CD4-positive, alpha-beta T cell (primary cell): ENCODE measurements at regions of chr16 and their contacts with region 1.

Region 1: DNA sequence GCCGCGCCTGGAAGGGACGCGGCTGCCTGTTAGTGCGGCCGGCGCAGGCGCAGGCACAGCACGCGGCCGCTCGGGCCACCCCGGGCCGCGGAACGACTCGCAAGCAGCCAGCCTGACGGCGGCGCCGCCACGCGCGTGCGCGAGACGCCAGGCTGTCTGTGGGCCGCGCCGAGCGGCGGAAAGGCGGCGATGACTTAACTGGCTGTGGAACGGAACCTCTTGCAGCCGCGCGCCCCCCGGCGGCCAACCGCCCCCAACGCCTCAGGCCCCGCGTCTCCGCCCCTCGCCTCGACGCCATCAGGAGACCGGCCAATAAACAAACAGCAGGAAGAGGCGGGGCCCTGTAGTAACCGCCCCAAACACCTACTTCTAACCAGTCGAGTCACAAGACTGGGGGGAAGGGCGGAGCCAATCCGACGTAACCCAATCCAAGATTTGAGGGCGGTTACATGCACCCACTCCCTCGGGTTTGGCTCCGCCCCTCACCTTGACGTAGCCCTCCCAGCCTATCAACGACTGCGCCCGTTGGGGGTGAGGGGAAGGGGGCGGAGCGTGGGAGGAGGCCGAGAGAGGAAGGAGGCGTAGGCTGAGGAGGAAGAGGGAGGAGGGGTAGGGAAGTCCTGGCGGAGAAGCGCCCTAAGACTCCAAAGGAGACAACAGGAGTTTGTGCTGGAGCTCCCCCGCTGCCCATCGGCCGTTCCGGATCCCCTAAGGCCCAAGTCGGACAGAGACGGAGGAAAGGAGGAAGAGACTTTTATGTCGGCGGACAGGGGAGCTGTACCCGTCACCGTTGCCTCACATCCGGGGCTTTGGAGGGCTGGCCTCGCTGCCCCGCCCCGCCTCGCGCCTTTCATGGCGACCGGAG is at the start of gene FBRS:
- DNase-seq: peak; percentile 99 to 100 (median 100)
- ATAC-seq: peak; percentile 74
- H3K4me3 ChIP-seq: peak within 1 kb of the TSS; percentile 93
- H3K4me3 Mint-ChIP-seq: peak within 1 kb of the TSS; percentile 94
- H3K27ac ChIP-seq: peak within 1 kb of the TSS; percentile 99
- H3K27ac Mint-ChIP-seq: peak within 1 kb of the TSS; percentile 99
- H3K4me1 ChIP-seq: peaks cover 51% of the 10 kb centered on the region
- H3K4me1 Mint-ChIP-seq: peaks cover 44% of the 10 kb centered on the region
- H3K27me3 ChIP-seq: no peaks in the 10 kb centered on the region
- H3K27me3 Mint-ChIP-seq: no peaks in the 10 kb centered on the region
- CTCF ChIP-seq: peak; percentile 78
- total RNA-seq, gene FBRS: 162 to 163 TPM

Region 2: DNA sequence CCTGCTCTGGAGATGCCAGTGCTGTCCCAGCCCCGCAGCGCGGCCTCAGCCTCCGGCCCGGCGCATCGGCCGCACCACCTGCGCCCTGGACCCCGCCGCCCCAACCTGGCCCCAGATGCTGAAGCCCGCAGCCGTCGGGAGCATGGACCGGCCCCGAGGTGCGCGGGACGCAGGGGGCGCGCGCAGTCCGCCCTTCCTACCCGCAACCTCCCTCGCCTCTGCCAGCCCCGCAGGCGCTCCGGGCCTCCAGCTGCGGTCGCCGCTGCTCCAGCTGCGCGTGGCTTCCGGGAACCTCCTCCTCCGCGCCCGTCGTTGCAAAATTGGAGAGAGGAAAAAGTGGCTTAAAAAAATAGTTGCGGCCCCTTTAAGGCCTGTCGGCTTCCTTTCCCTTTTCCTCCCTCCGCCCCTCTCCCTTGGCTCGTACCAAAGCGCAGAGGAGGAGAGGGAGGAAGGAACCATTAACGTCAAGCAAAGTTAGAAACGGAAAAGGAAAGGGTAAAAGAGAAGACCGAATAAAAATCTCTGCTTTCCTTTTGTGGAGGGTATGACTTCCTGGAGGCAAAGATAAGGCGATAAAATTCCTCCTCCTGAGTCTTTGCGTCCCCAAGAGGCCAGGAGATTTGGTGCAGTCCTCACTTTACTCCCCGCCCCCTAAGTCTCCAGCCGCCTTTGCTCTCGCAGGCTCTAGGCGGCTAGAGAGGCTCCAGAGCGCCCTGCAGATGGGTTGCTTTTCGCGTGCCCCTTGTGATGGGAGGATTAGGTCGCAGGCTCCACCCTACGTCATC is 795.0 kb before region 1 on chr16 and contains the start of gene CDIPT:
- CTCF ChIA-PET with region 1: no interaction called
- POLR2A ChIA-PET with region 1: no interaction called
- intact Hi-C with region 1: loop called in 1 of 2 experiments (anchors 1 kb)
- DNase-seq: peak; percentile 85 to 98 (median 90)
- ATAC-seq: peak; percentile 96
- H3K4me3 ChIP-seq: peak within 1 kb of the TSS; percentile 76
- H3K4me3 Mint-ChIP-seq: peak within 1 kb of the TSS; percentile 95
- H3K27ac ChIP-seq: peak within 1 kb of the TSS; percentile 87 to 97
- H3K27ac Mint-ChIP-seq: peak within 1 kb of the TSS; percentile 95
- H3K4me1 ChIP-seq: peaks cover 30% of the 10 kb centered on the region
- H3K4me1 Mint-ChIP-seq: peaks cover 22% of the 10 kb centered on the region
- H3K27me3 ChIP-seq: no peaks in the 10 kb centered on the region
- H3K27me3 Mint-ChIP-seq: no peaks in the 10 kb centered on the region
- CTCF ChIP-seq: peak; percentile 70
- total RNA-seq, gene CDIPT: 25.7 to 27.0 TPM

Region 3: GRCh38 chr16:30340621-30341020 is 317.5 kb before region 1 on chr16:
- CTCF ChIA-PET with region 1: no interaction called
- POLR2A ChIA-PET with region 1: no interaction called
- intact Hi-C with region 1: no loop called
- DNase-seq: peak in 2 of 14 experiments; percentile 19 to 23
- ATAC-seq: peak; percentile 66
- H3K4me3 ChIP-seq: no peak overlapping the region
- H3K4me3 Mint-ChIP-seq: no peak overlapping the region
- H3K27ac ChIP-seq: no peak overlapping the region
- H3K27ac Mint-ChIP-seq: peak overlapping the region; percentile 24
- H3K4me1 ChIP-seq: peaks cover 15% of the 10 kb centered on the region
- H3K4me1 Mint-ChIP-seq: peaks cover 11% of the 10 kb centered on the region
- H3K27me3 ChIP-seq: no peaks in the 10 kb centered on the region
- H3K27me3 Mint-ChIP-seq: no peaks in the 10 kb centered on the region
- CTCF ChIP-seq: no peak

Region 4: GRCh38 chr16:30534368-30535105 is 123.6 kb before region 1 on chr16 and contains the start of gene ZNF747:
- CTCF ChIA-PET with region 1: interaction called, 5 read pairs
- POLR2A ChIA-PET with region 1: interaction called, 20 read pairs
- intact Hi-C with region 1: no loop called
- DNase-seq: peak; percentile 88 to 95 (median 92)
- ATAC-seq: peak; percentile 80
- H3K4me3 ChIP-seq: peak within 1 kb of the TSS; percentile 87
- H3K4me3 Mint-ChIP-seq: peak within 1 kb of the TSS; percentile 94
- H3K27ac ChIP-seq: peak within 1 kb of the TSS; percentile 85 to 96
- H3K27ac Mint-ChIP-seq: peak within 1 kb of the TSS; percentile 99
- H3K4me1 ChIP-seq: peaks cover 52% of the 10 kb centered on the region
- H3K4me1 Mint-ChIP-seq: peaks cover 43% of the 10 kb centered on the region
- H3K27me3 ChIP-seq: no peaks in the 10 kb centered on the region
- H3K27me3 Mint-ChIP-seq: no peaks in the 10 kb centered on the region
- CTCF ChIP-seq: no peak
- total RNA-seq, gene ZNF747: 6.3 to 6.7 TPM

Region 5: DNA sequence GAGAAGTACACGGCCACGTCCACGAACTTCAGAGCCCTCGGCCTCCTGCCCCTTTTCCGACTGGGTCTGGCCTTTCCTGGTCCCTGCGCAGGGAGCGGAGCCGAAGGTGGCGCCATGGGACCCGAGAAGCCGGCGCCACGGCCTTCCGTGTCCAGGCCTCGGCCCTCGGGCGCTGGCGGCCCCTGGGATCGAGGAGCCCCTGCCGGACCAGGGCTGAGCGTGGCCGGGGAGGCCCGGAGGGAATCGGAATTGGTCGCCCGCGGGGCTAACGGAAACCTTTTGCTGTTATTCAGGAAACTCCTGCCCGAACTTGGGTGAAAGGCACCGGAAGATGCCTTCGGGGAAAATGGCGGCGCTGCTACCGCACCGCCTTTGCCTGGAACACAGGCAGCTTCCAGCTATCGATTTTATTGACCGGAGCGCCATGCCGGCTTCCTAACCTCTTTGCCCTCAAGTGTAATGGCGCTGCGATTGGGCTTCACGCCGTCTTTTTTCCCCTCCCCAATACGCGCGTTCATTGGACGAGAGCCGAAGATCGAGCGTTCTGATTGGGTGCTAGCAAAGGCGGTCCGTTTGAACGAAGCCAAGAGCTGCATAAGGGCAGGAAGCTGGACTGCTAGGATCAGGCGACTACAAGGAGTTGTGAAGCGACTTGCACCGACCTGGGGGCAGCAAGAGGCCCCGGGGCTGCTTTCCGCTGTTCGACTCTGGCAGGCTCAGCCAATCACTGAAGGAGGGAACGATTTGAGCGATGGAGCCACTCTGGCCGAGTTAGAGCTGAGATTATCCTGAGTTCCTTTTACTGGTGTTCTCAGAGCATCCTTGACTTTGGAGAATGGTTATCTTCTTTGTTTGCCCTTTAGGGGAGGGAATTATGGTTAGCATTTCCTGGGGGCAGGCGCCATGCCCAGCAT is 47.9 kb before region 1 on chr16 and contains the start of gene ZNF689:
- CTCF ChIA-PET with region 1: interaction called, 4 read pairs
- POLR2A ChIA-PET with region 1: interaction called, 19 read pairs
- intact Hi-C with region 1: no loop called
- DNase-seq: peak; percentile 88 to 97 (median 94)
- ATAC-seq: peak; percentile 92
- H3K4me3 ChIP-seq: peak within 1 kb of the TSS; percentile 74
- H3K4me3 Mint-ChIP-seq: peak within 1 kb of the TSS; percentile 91
- H3K27ac ChIP-seq: peak within 1 kb of the TSS; percentile 86 to 89
- H3K27ac Mint-ChIP-seq: peak within 1 kb of the TSS; percentile 93
- H3K4me1 ChIP-seq: peaks cover 26% of the 10 kb centered on the region
- H3K4me1 Mint-ChIP-seq: peaks cover 23% of the 10 kb centered on the region
- H3K27me3 ChIP-seq: no peaks in the 10 kb centered on the region
- H3K27me3 Mint-ChIP-seq: no peaks in the 10 kb centered on the region
- CTCF ChIP-seq: no peak
- total RNA-seq, gene ZNF689: 15.3 to 15.7 TPM

Region 6: DNA sequence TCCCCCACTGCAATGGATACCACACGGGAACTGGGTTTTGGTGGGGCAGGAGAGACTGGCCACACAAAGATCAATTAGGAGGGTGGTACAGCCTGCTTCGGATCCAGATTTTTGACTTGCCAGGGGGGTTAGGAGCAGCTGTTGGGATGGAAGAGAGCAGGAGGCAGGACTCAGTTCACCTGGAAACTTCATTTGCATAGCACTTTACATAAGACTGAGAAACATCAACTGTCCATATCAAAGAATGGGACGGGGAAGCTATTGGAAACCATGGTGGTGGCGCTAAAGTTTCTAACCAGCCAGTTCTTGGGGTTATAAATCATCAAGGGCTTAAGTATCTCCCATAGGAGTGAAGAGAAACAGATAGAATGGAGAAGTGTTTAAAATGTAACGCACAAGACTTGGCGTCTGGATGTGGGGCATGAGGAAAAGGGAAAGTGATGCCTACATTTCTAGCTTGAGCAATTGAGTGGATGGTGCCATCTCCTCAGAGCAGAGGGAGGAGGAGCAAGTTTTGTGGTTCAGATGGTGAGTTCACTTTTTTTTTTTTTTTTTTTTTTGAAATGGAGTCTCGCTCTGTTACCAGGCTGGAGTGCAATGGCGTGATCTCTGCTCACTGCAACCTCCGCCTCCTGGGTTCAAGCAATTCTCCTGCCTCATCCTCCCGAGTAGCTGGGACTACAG is 34.4 kb after region 1 on chr16:
- CTCF ChIA-PET with region 1: interaction called, 53 read pairs
- POLR2A ChIA-PET with region 1: interaction called, 82 read pairs
- intact Hi-C with region 1: loop called (anchors 1 kb)
- DNase-seq: no peak
- ATAC-seq: no peak
- H3K4me3 ChIP-seq: no peak overlapping the region
- H3K4me3 Mint-ChIP-seq: no peak overlapping the region
- H3K27ac ChIP-seq: no peak overlapping the region
- H3K27ac Mint-ChIP-seq: no peak overlapping the region
- H3K4me1 ChIP-seq: peaks cover 16% of the 10 kb centered on the region
- H3K4me1 Mint-ChIP-seq: peaks cover 16% of the 10 kb centered on the region
- H3K27me3 ChIP-seq: no peaks in the 10 kb centered on the region
- H3K27me3 Mint-ChIP-seq: no peaks in the 10 kb centered on the region
- CTCF ChIP-seq: no peak

Region 7: GRCh38 chr16:30724641-30725417 is 66.7 kb after region 1 on chr16:
- CTCF ChIA-PET with region 1: no interaction called
- POLR2A ChIA-PET with region 1: no interaction called
- intact Hi-C with region 1: no loop called
- DNase-seq: peak in 3 of 14 experiments; percentile 24 to 53 (median 52)
- ATAC-seq: no peak
- H3K4me3 ChIP-seq: no peak overlapping the region
- H3K4me3 Mint-ChIP-seq: no peak overlapping the region
- H3K27ac ChIP-seq: no peak overlapping the region
- H3K27ac Mint-ChIP-seq: peak overlapping the region; percentile 18
- H3K4me1 ChIP-seq: peaks cover 4% of the 10 kb centered on the region
- H3K4me1 Mint-ChIP-seq: peaks cover 5% of the 10 kb centered on the region
- H3K27me3 ChIP-seq: no peaks in the 10 kb centered on the region
- H3K27me3 Mint-ChIP-seq: no peaks in the 10 kb centered on the region
- CTCF ChIP-seq: no peak

Region 8: DNA sequence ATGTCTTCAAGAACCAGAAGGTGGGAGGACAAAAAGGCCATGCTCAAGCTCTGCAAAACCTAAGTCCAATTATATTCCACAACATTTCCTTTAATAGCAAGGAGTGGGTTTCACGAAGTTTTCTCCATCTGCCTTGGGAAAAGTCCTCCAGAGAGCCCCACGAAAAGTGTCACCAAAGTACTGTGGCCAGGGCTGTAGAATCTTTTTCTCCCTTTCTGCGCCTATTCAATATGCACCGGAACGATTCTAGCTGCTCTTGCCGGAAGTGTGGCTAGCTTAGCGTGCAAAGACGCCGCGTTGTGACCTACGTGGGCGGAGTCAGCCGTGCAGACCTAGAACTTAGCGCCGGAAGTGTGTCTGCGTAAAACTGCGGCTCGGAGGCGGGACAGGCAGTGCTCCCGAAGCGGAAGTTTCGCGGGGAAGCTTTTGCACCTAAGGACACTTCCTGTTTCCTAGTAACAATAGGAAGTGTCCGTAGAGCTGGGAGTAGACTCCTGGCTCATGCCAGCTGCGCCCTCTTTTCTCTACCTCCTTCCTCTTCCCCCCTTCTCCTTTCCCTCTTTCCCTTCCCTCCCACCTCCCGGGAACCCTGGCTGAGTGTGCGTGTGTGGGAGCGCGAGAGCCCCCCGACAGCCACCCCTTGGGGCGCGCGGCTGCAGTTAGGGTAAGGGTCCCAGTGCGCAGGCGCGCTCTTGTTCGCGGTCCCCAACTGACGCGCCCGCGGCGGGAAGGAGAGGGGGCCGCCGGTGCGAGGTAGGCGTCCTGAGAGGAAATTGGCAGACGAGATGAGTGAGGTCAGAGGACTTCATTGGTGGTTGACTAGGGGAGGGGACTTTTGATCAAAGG is 416.1 kb after region 1 on chr16 and contains the starts of genes ZNF646 and ZNF668:
- CTCF ChIA-PET with region 1: no interaction called
- POLR2A ChIA-PET with region 1: interaction called, 11 read pairs
- intact Hi-C with region 1: no loop called
- DNase-seq: peak; percentile 94 to 100 (median 97)
- ATAC-seq: peak; percentile 81
- H3K4me3 ChIP-seq: peak within 1 kb of the TSS; percentile 96
- H3K4me3 Mint-ChIP-seq: peak within 1 kb of the TSS; percentile 98
- H3K27ac ChIP-seq: peak within 1 kb of the TSS; percentile 93 to 95
- H3K27ac Mint-ChIP-seq: peak within 1 kb of the TSS; percentile 92
- H3K4me1 ChIP-seq: peaks cover 35% of the 10 kb centered on the region
- H3K4me1 Mint-ChIP-seq: peaks cover 34% of the 10 kb centered on the region
- H3K27me3 ChIP-seq: no peaks in the 10 kb centered on the region
- H3K27me3 Mint-ChIP-seq: no peaks in the 10 kb centered on the region
- CTCF ChIP-seq: no peak
- total RNA-seq, gene ZNF646: 14.3 to 16.6 TPM
- total RNA-seq, gene ZNF668: 4.5 to 6.0 TPM